ENCODE measurements at regions of chr1 and their contacts with region 1.

Region 1: DNA sequence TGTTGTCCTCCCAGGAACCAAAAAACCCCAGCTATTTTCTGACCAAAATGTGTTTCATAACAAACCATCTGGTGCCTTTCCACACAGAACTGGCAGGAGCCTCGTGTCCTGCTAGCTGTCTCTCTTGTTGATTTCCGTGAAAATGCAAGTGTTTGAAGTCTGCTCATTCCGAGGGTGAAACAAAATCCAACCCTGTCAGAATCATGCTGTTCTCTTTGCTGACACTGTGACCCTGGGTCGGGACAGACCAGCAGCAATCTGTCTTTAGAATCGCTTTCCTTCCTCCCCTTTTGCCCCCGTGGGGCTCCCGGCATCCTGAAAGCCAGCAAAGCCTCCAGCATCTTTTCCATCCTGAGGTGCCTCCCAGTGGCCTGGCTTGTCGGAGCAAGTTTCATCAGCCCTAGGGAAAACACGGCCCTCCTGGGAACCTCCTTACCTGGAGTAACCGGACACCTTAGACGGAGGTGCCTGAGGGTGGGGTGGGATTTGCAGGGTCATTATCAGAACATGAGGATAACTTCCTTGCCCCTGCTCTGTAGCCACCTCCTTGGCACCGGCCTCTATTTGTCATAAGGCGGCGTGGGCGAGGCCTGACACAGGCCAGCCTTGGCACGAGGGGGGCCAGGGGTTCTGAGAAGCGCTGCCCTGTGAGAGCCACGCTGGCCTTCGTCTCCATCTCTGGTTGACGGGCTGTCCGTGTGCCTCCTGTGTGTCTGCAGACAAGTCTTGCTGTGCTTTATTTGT is 24.9 kb downstream of the LDLRAP1 start:
- DNase-seq: peak; percentile 48 to 67
- ATAC-seq: peak; percentile 11 to 22
- H3K4me3 ChIP-seq: no peak overlapping the region
- H3K27ac ChIP-seq: peak overlapping the region; percentile 86 to 92 (median 88)
- H3K4me1 ChIP-seq: peaks cover 49 to 57% of the 10 kb centered on the region in 2 donors
- H3K27me3 ChIP-seq: no peaks in the 10 kb centered on the region
- CTCF ChIP-seq: no peak
- POLR2A ChIP-seq: no peak

Region 2: GRCh38 chr1:25543425-25544242 is 24.6 kb before region 1 on chr1 and contains the start of gene LDLRAP1:
- in situ Hi-C with region 1: no loop called
- intact Hi-C with region 1: loop called (anchors 2 kb)
- DNase-seq: peak; percentile 48 to 68
- ATAC-seq: peak; percentile 88
- H3K4me3 ChIP-seq: peak within 1 kb of the TSS; percentile 76 to 95 (median 89)
- H3K27ac ChIP-seq: peak within 1 kb of the TSS; percentile 82 to 97 (median 93)
- H3K4me1 ChIP-seq: peaks cover 25 to 29% of the 10 kb centered on the region in 2 donors
- H3K27me3 ChIP-seq: no peaks in the 10 kb centered on the region
- CTCF ChIP-seq: no peak
- POLR2A ChIP-seq: peak; percentile 98 to 99
- total RNA-seq, gene LDLRAP1: 10.0 to 17.9 (median 14.2) TPM

Region 3: GRCh38 chr1:25549273-25550154 is 18.7 kb before region 1 on chr1:
- in situ Hi-C with region 1: no loop called
- intact Hi-C with region 1: loop called (anchors 2 kb)
- DNase-seq: peak in 1 of 2 donors; percentile 60
- ATAC-seq: peak; percentile 82 to 84
- H3K4me3 ChIP-seq: no peak overlapping the region
- H3K27ac ChIP-seq: peak overlapping the region; percentile 80 to 90 (median 81)
- H3K4me1 ChIP-seq: peaks cover 74 to 75% of the 10 kb centered on the region in 2 donors
- H3K27me3 ChIP-seq: no peaks in the 10 kb centered on the region
- CTCF ChIP-seq: no peak
- POLR2A ChIP-seq: peak; percentile 36

Region 4: GRCh38 chr1:25608488-25609178 is 40.4 kb after region 1 on chr1:
- in situ Hi-C with region 1: no loop called
- intact Hi-C with region 1: loop called (anchors 2 kb)
- DNase-seq: peak; percentile 81 to 87
- ATAC-seq: peak; percentile 98 to 99
- H3K4me3 ChIP-seq: peak overlapping the region; percentile 36 to 55 (median 44)
- H3K27ac ChIP-seq: peak overlapping the region; percentile 49 to 74 (median 64)
- H3K4me1 ChIP-seq: no peaks in the 10 kb centered on the region
- H3K27me3 ChIP-seq: no peaks in the 10 kb centered on the region
- CTCF ChIP-seq: peak; percentile 38 to 88 (median 84)
- POLR2A ChIP-seq: peak in 1 of 2 donors; percentile 12

Region 5: GRCh38 chr1:25642574-25643108 is 74.4 kb after region 1 on chr1:
- in situ Hi-C with region 1: no loop called
- intact Hi-C with region 1: no loop called
- DNase-seq: no peak
- ATAC-seq: peak in 1 of 2 donors; percentile 36
- H3K4me3 ChIP-seq: no peak overlapping the region
- H3K27ac ChIP-seq: peak overlapping the region; percentile 31 to 44 (median 39)
- H3K4me1 ChIP-seq: peaks cover 10 to 14% of the 10 kb centered on the region in 2 donors
- H3K27me3 ChIP-seq: no peaks in the 10 kb centered on the region
- CTCF ChIP-seq: no peak
- POLR2A ChIP-seq: no peak

Region 6: GRCh38 chr1:25695090-25695770 is 127.0 kb after region 1 on chr1:
- in situ Hi-C with region 1: no loop called
- intact Hi-C with region 1: loop called (anchors 5 kb)
- DNase-seq: peak; percentile 75 to 85
- ATAC-seq: peak; percentile 75 to 77
- H3K4me3 ChIP-seq: no peak overlapping the region
- H3K27ac ChIP-seq: peak overlapping the region; percentile 48 to 76 (median 70)
- H3K4me1 ChIP-seq: peaks cover 40 to 44% of the 10 kb centered on the region in 2 donors
- H3K27me3 ChIP-seq: no peaks in the 10 kb centered on the region
- CTCF ChIP-seq: peak in 1 of 5 experiments; percentile 20
- POLR2A ChIP-seq: no peak